Activated CD4-positive, alpha-beta memory T cell treated with anti-CD3 and anti-CD28 coated beads, Interleukin-2, amount 10 ng/mL, durations not matched to agents 7 days and 5 days (primary cell): ENCODE measurements at regions of chr1 and their contacts with region 1.

Region 1: GRCh38 chr1:201481761-201482493 is 12.9 kb upstream of the PHLDA3 start:
- DNase-seq: peak; percentile 86
- H3K4me3 Mint-ChIP-seq: peak overlapping the region; percentile 68
- H3K27ac Mint-ChIP-seq: peak overlapping the region; percentile 34
- H3K4me1 Mint-ChIP-seq: peaks cover 35% of the 10 kb centered on the region
- H3K27me3 Mint-ChIP-seq: peaks cover 12% of the 10 kb centered on the region

Region 2: GRCh38 chr1:201436393-201436792 is 45.5 kb before region 1 on chr1:
- CTCF ChIA-PET with region 1: interaction called, 28 read pairs
- POLR2A ChIA-PET with region 1: interaction called, 3 read pairs
- DNase-seq: no peak
- H3K4me3 Mint-ChIP-seq: no peak overlapping the region
- H3K27ac Mint-ChIP-seq: no peak overlapping the region
- H3K4me1 Mint-ChIP-seq: peaks cover 4% of the 10 kb centered on the region
- H3K27me3 Mint-ChIP-seq: peaks cover 34% of the 10 kb centered on the region

Region 3: DNA sequence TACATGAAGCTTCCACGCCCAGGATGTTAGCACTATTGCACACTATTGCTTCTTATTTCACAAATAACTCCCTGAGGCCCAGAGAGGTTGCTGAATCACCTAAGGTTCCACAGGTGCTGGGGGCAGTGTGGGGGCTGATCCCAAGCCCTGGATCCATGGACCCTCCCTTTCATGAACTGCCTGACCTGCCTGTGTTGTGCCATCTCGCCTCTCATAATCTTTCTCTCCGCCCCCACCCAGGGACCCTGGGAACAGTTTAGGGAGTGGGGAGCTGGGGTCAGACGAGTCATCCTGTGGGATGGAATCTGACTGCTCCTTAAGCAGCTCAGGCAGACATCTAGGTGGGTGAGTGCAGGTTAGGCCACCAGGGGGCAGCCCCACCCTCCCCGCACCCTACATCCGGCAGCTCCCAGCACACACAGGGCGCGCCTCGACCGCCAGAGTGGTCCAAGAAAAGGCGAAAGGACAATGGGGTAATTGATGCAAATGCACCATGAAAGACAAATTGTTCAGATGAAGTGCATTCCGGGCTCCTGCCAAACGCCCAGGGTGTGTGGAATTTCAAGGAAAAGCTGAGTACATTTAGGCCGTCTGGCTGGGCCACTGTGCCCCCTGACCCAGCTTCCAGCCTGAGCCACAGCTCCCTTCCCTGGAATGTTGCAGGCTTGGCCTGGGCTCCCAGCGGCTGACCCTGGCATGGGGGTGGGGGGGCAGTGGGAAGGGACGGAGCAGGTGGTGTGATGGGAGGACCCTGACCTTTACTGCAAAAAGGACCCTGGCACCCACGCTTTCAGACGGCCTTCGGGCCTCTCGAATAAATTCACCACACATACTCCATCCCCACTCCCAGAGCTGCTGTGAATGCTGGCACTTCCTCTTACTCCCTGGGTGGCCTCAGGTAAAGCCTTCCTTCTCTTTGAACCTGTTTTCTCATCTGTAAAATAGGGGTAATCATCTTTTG is 33.7 kb before region 1 on chr1:
- CTCF ChIA-PET with region 1: interaction called, 153 read pairs
- POLR2A ChIA-PET with region 1: interaction called, 9 read pairs
- DNase-seq: peak; percentile 78
- H3K4me3 Mint-ChIP-seq: no peak overlapping the region
- H3K27ac Mint-ChIP-seq: no peak overlapping the region
- H3K4me1 Mint-ChIP-seq: peaks cover 37% of the 10 kb centered on the region
- H3K27me3 Mint-ChIP-seq: peaks cover 25% of the 10 kb centered on the region

Region 4: GRCh38 chr1:201455686-201456085 is 26.2 kb before region 1 on chr1:
- CTCF ChIA-PET with region 1: interaction called, 153 read pairs
- POLR2A ChIA-PET with region 1: interaction called, 5 read pairs
- DNase-seq: no peak
- H3K4me3 Mint-ChIP-seq: no peak overlapping the region
- H3K27ac Mint-ChIP-seq: no peak overlapping the region
- H3K4me1 Mint-ChIP-seq: peaks cover 34% of the 10 kb centered on the region
- H3K27me3 Mint-ChIP-seq: peaks cover 30% of the 10 kb centered on the region

Region 5: GRCh38 chr1:201460814-201461657 is 20.9 kb before region 1 on chr1:
- CTCF ChIA-PET with region 1: interaction called, 12 read pairs
- POLR2A ChIA-PET with region 1: no interaction called
- DNase-seq: no peak
- H3K4me3 Mint-ChIP-seq: no peak overlapping the region
- H3K27ac Mint-ChIP-seq: no peak overlapping the region
- H3K4me1 Mint-ChIP-seq: no peaks in the 10 kb centered on the region
- H3K27me3 Mint-ChIP-seq: peaks cover 17% of the 10 kb centered on the region

Region 6: DNA sequence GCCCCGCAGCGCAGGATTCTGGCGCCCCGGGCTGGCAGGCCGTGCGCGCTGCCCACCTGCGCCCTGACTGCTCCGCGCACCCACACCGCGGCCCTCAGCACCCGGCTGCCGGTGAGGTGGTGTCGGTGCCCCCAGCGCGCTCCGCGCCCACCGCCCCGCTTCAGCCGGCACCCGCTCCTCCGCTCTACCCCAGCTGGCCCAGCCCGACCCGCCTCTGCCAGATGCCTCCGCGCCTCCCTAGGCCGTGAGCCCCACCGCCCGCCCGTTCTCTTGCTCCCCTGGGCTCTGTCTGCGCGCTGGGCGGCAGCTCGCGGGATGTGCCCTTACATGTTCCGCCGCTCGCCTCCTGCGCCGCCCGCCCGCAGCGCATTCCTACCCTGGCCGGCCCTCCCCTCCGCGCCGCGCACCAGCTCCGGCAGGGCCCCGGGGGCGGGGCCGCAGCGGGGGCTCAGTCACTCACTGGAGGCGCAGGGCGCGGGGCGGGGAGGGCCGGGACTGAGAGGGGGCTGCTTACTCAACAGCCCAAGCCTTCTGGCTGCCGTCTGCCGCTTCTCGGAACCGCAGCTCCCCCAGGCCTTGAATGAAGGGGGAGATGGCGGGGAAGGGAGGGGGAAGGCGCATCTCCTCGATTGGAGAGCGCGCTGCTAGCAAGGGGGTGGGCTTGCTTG is 12.9 kb before region 1 on chr1 and contains the start of gene PHLDA3:
- CTCF ChIA-PET with region 1: interaction called, 35 read pairs
- POLR2A ChIA-PET with region 1: interaction called, 18 read pairs
- DNase-seq: peak; percentile 69
- H3K4me3 Mint-ChIP-seq: peak within 1 kb of the TSS; percentile 77
- H3K27ac Mint-ChIP-seq: peak within 1 kb of the TSS; percentile 45
- H3K4me1 Mint-ChIP-seq: peaks cover 21% of the 10 kb centered on the region
- H3K27me3 Mint-ChIP-seq: peaks cover 37% of the 10 kb centered on the region
- total RNA-seq, gene PHLDA3: 9.0 to 11.4 TPM

Region 7: GRCh38 chr1:201506556-201507359 is 24.8 kb after region 1 on chr1 and contains the start of gene CSRP1:
- CTCF ChIA-PET with region 1: interaction called, 350 read pairs
- POLR2A ChIA-PET with region 1: interaction called, 48 read pairs
- DNase-seq: peak; percentile 89
- H3K4me3 Mint-ChIP-seq: peak within 1 kb of the TSS; percentile 93
- H3K27ac Mint-ChIP-seq: peak within 1 kb of the TSS; percentile 82
- H3K4me1 Mint-ChIP-seq: peaks cover 62% of the 10 kb centered on the region
- H3K27me3 Mint-ChIP-seq: no peaks in the 10 kb centered on the region
- total RNA-seq, gene CSRP1: 77.1 to 77.8 TPM